PC-9 (cell line): ENCODE measurements at regions of chr10 and their contacts with region 1.

Region 1: GRCh38 chr10:12710594-12711349 is 290.7 kb downstream of the CCDC3 start:
- DNase-seq: peak; percentile 67 to 76
- H3K4me3 ChIP-seq: no peak overlapping the region
- H3K27ac ChIP-seq: peak overlapping the region; percentile 93
- H3K4me1 ChIP-seq: peaks cover 58% of the 10 kb centered on the region
- H3K27me3 ChIP-seq: no peaks in the 10 kb centered on the region
- CTCF ChIP-seq: peak; percentile 88

Region 2: DNA sequence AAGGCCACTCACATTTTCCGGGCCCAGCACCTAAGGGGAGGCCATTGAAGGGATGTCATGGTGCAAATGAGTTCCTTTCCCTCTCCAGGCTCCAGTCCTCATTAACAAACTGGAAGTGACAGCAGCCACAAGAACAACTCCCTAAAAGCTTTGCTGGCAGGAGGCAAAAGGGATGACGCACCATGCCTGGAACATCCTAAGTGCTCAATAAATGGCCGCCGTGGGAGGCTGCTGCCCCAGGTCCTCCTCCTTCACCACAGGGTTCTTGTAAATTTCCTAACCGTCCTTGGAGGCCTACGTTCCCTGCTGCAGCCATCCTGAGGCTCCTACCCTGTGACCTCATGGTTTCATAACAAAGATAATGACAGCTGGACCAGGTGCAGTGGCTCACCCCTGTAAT is 402.7 kb before region 1 on chr10:
- CTCF ChIA-PET with region 1: no interaction called
- POLR2A ChIA-PET with region 1: no interaction called
- intact Hi-C with region 1: no loop called
- DNase-seq: no peak
- H3K4me3 ChIP-seq: no peak overlapping the region
- H3K27ac ChIP-seq: no peak overlapping the region
- H3K4me1 ChIP-seq: no peaks in the 10 kb centered on the region
- H3K27me3 ChIP-seq: no peaks in the 10 kb centered on the region
- CTCF ChIP-seq: no peak

Region 3: DNA sequence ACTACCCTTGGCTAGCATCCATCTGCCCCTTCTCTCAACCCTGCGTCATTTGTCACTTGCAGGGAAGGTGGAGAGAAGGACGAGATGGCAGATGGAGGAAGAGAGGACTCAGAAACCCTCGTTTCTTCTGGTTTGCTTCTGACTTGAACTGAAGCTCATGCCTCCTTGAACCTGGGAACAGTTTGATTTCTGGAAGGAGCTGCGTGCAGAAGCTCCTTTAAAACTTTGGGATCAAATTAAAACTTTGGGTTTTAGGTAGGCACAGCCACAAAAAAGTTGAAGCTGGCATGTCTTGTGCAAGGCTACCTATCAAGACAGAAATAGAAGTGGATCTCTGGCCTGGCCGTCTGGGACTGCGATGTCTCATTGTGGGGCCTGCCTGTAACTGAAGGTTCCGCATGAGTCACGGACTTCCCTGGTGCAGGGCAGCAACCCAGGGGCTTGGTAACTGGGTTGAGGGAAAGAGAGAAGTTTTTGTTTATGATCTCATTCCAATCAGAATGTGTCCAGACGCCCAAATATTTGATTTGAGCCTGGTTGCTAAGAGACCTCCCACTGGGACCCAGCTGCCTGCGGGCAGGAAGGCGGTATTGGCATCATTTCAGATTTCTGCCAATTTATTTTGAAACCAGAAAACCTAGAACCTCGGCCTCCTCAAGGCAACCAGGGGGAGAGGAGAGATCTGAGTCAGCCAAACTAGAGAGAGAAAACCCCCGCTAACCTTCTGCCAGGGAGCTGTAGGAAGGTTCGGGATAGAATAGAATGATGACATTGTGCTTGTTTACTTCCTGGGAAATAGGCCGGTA is 377.2 kb before region 1 on chr10:
- CTCF ChIA-PET with region 1: no interaction called
- POLR2A ChIA-PET with region 1: no interaction called
- intact Hi-C with region 1: loop called (anchors 5 kb)
- DNase-seq: peak; percentile 90 to 96
- H3K4me3 ChIP-seq: peak overlapping the region; percentile 46; the same call in 1 of the 2 replicates
- H3K27ac ChIP-seq: peak overlapping the region; percentile 96
- H3K4me1 ChIP-seq: peaks cover 45% of the 10 kb centered on the region
- H3K27me3 ChIP-seq: no peaks in the 10 kb centered on the region
- CTCF ChIP-seq: no peak

Region 4: GRCh38 chr10:12348870-12349628 is 361.7 kb before region 1 on chr10 and contains the start of gene CAMK1D:
- CTCF ChIA-PET with region 1: no interaction called
- POLR2A ChIA-PET with region 1: no interaction called
- intact Hi-C with region 1: loop called (anchors 2 kb)
- DNase-seq: peak; percentile 46 to 70
- H3K4me3 ChIP-seq: peak within 1 kb of the TSS; percentile 90
- H3K27ac ChIP-seq: 0 out of 2 replicates have a peak within 1 kb of the TSS, but pooled peaks have one; percentile 1
- H3K4me1 ChIP-seq: peaks cover 22% of the 10 kb centered on the region
- H3K27me3 ChIP-seq: no peaks in the 10 kb centered on the region
- CTCF ChIP-seq: no peak
- total RNA-seq, gene CAMK1D: 6.0 and 8.8 TPM in 2 replicates

Region 5: GRCh38 chr10:12500381-12501303 is 210.1 kb before region 1 on chr10:
- CTCF ChIA-PET with region 1: no interaction called
- POLR2A ChIA-PET with region 1: no interaction called
- intact Hi-C with region 1: no loop called
- DNase-seq: peak; percentile 25 to 72
- H3K4me3 ChIP-seq: no peak overlapping the region
- H3K27ac ChIP-seq: peak overlapping the region; percentile 42
- H3K4me1 ChIP-seq: peaks cover 33% of the 10 kb centered on the region
- H3K27me3 ChIP-seq: no peaks in the 10 kb centered on the region
- CTCF ChIP-seq: no peak

Region 6: DNA sequence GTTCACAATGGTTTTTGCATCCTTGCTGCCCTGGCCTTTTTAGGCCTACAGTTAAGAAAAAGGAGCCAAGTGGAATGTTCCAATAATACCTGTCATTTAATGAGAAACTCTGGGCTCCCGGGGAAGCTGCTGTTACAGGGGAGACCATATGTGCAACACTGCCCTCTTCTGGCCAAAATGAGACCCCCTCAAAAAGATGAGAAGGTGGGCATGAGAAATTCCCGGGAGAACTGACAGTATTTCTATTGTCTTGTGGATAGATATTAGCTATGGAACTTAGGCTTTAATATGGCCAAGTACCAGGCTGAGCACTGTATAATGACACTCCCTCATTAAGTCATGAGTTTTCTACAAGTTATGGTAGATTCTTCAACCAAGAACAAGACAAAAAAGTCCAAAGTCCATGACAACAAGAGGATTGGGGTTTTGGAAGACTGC is 191.4 kb after region 1 on chr10:
- CTCF ChIA-PET with region 1: no interaction called
- POLR2A ChIA-PET with region 1: no interaction called
- intact Hi-C with region 1: loop called (anchors 1 kb)
- DNase-seq: peak in 1 of 2 experiments; percentile 36
- H3K4me3 ChIP-seq: no peak overlapping the region
- H3K27ac ChIP-seq: no peak overlapping the region
- H3K4me1 ChIP-seq: no peaks in the 10 kb centered on the region
- H3K27me3 ChIP-seq: peaks cover 33% of the 10 kb centered on the region
- CTCF ChIP-seq: peak; percentile 82